HEK293 (cell line): ENCODE measurements at regions of chr12 and their contacts with region 1.

Region 1: GRCh38 chr12:13211859-13212664 is 15.5 kb downstream of the EMP1 start:
- H3K4me3 ChIP-seq: no peak overlapping the region
- H3K27ac ChIP-seq: no peak overlapping the region
- H3K4me1 ChIP-seq: no peaks in the 10 kb centered on the region
- CTCF ChIP-seq: peak; percentile 63; the same call in 1 of the 2 replicates

Region 2: DNA sequence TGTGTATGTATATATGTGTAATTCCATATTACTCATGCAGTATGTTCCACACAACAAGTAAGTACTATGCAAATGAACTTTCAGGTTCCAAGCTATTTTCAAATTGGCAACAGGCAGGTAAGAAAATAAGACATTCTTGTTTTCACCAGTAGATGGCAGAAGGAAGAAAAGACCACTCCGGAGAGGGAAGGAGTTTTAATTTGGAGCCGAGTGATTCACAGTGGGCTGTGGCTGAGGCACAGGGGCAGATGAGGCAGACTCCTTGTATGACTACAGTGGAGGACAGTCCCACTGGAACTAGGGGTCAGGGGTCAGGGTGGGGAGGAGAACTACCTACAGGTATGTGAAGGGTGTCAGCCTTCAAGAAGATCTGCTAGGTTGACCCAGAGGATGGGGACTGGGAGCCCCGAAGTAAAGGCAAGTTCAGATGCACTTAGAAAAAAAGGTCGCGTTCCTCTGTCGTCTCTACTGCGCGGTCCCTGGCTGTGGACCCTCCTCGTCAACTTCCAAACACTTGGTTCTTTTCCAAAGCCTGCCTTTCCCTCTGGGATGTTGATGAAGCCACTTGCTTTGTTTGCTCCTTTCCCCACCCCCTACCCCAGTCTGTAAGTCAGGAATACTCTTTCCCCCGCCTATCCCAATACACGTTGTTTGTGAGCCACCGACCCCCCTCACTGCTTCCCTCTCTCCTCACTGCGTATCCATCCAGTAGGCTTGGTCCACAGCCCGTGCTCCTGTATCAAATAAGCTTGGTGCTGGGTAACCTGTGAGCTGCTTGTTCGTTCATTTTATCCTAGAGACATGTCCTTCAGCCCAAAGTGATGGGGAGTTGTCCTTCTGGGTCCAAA is 374.8 kb before region 1 on chr12:
- CTCF ChIA-PET with region 1: interaction called, 10 read pairs
- POLR2A ChIA-PET with region 1: no interaction called
- H3K4me3 ChIP-seq: no peak overlapping the region
- H3K27ac ChIP-seq: peak overlapping the region; percentile 22; the same call in 1 of the 2 replicates
- H3K4me1 ChIP-seq: peaks cover 24% of the 10 kb centered on the region
- CTCF ChIP-seq: peak; percentile 31; the same call in 1 of the 2 replicates

Region 3: GRCh38 chr12:12975322-12976077 is 236.6 kb before region 1 on chr12:
- CTCF ChIA-PET with region 1: interaction called, 10 read pairs
- POLR2A ChIA-PET with region 1: no interaction called
- H3K4me3 ChIP-seq: no peak overlapping the region
- H3K27ac ChIP-seq: no peak overlapping the region
- H3K4me1 ChIP-seq: no peaks in the 10 kb centered on the region
- CTCF ChIP-seq: peak; percentile 53; the same call in 1 of the 2 replicates

Region 4: GRCh38 chr12:13023811-13024530 is 188.1 kb before region 1 on chr12:
- CTCF ChIA-PET with region 1: interaction called, 40 read pairs
- POLR2A ChIA-PET with region 1: no interaction called
- H3K4me3 ChIP-seq: no peak overlapping the region
- H3K27ac ChIP-seq: no peak overlapping the region
- H3K4me1 ChIP-seq: no peaks in the 10 kb centered on the region
- CTCF ChIP-seq: no peak

Region 5: DNA sequence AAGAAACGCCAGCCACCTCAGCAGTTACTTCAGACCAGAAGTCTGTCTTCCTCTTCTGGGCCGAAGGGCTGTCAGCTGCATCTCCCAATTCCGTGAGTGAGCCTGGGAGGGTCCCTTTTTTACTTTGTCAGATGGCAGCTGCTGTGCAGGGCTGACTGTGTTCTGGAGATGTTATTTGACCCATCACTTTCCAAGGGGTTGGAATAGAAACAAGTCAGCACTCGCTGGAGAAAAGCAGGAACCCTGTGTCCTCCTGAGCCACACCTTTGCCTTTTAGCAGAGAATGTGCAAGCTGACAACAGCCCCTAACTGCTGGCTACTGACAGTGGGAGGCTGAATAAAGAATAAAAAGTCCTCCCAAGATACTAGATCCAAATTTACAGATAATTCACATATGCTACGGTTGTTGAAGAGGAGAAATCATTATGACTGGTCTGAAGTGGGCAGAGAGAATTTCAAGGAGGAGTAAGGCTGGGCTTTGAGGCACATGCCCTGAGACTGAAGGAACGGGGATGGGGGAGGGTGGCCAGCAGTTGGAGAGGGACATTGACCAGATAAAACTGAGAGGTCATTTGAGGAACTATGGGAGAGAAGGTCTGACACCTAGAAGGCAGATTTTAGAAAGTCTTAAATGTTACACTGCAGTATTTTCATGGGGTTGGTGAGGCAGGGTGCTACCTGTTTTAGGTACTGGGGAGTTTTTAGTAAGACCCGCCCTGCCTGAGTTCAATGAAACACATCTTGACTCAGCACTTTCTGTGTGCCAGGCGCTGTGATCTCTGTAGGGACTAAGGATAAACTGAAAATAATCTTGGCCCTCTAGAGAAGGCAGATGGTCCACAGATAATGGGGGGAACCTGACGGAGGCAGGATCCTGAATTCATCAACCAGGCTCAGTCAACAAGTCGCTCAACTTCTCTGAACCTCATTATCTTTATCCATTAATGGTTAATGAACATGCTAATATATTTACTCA is 140.5 kb before region 1 on chr12:
- CTCF ChIA-PET with region 1: no interaction called
- POLR2A ChIA-PET with region 1: no interaction called
- H3K4me3 ChIP-seq: no peak overlapping the region
- H3K27ac ChIP-seq: no peak overlapping the region
- H3K4me1 ChIP-seq: no peaks in the 10 kb centered on the region
- CTCF ChIP-seq: no peak

Region 6: GRCh38 chr12:13100882-13101769 is 110.9 kb before region 1 on chr12:
- CTCF ChIA-PET with region 1: interaction called, 71 read pairs
- POLR2A ChIA-PET with region 1: interaction called, 5 read pairs
- H3K4me3 ChIP-seq: peak overlapping the region; percentile 56
- H3K27ac ChIP-seq: peak overlapping the region; percentile 96
- H3K4me1 ChIP-seq: peaks cover 36% of the 10 kb centered on the region
- CTCF ChIP-seq: no peak; the same call in 1 of the 2 replicates

Region 7: DNA sequence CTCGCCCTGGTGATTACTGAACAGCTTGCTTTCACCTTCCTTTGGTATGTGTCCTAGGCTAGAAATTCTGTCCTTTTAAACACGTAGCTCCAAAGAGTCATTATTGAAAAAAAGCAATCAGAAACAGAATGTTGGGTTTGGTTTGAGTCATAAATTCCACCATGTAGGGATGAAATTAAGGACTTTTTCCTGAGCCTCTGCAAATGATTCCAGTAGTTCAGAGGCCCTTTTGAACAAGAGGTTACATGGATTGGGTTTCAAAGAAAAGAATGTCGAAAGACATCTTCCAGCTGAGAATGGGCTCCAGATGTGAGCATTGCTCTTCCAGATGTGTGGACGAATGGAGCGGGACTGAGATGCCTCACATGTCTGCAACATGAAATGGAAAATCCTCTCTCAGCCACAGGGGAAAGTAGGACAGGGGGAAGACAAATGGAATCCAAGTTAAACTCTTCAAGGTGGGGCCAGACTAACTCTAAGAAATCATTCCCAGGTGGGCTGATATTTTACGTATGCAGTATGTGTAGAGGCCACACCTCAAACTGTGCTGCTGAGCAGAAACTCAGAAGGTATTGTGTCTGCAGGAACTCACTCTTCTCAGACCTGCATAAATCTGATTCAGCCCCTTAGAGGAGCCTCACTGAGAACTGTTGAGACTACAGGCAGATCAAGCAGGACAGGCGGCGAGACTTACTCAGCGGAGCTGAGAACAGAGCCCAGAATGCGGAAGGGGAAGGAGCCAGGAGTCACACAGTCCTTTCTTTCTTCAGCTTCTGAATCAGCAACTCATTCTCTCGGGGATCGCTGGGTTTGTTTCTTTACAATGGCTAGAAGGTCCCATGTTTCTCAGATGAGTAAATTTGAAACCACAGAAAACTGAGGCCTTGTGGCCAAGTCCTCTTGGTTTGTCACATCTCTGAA is 38.8 kb before region 1 on chr12:
- CTCF ChIA-PET with region 1: no interaction called
- POLR2A ChIA-PET with region 1: no interaction called
- H3K4me3 ChIP-seq: no peak overlapping the region
- H3K27ac ChIP-seq: no peak overlapping the region
- H3K4me1 ChIP-seq: no peaks in the 10 kb centered on the region
- CTCF ChIP-seq: no peak

Region 8: GRCh38 chr12:13223179-13223859 is 11.3 kb after region 1 on chr12:
- CTCF ChIA-PET with region 1: interaction called, 41 read pairs
- POLR2A ChIA-PET with region 1: no interaction called
- H3K4me3 ChIP-seq: no peak overlapping the region
- H3K27ac ChIP-seq: no peak overlapping the region
- H3K4me1 ChIP-seq: peaks cover 4% of the 10 kb centered on the region; the same call in 1 of the 2 replicates
- CTCF ChIP-seq: no peak

Region 9: GRCh38 chr12:13255792-13256691 is 44.0 kb after region 1 on chr12:
- CTCF ChIA-PET with region 1: interaction called, 16 read pairs
- POLR2A ChIA-PET with region 1: no interaction called
- H3K4me3 ChIP-seq: peak overlapping the region; percentile 32
- H3K27ac ChIP-seq: no peak overlapping the region
- H3K4me1 ChIP-seq: peaks cover 14% of the 10 kb centered on the region
- CTCF ChIP-seq: peak; percentile 99

Region 10: GRCh38 chr12:13278249-13278787 is 66.3 kb after region 1 on chr12:
- CTCF ChIA-PET with region 1: no interaction called
- POLR2A ChIA-PET with region 1: no interaction called
- H3K4me3 ChIP-seq: no peak overlapping the region
- H3K27ac ChIP-seq: no peak overlapping the region
- H3K4me1 ChIP-seq: no peaks in the 10 kb centered on the region
- CTCF ChIP-seq: peak; percentile 84